ENCODE measurements at regions of chr1 and their contacts with region 1.

Region 1: DNA sequence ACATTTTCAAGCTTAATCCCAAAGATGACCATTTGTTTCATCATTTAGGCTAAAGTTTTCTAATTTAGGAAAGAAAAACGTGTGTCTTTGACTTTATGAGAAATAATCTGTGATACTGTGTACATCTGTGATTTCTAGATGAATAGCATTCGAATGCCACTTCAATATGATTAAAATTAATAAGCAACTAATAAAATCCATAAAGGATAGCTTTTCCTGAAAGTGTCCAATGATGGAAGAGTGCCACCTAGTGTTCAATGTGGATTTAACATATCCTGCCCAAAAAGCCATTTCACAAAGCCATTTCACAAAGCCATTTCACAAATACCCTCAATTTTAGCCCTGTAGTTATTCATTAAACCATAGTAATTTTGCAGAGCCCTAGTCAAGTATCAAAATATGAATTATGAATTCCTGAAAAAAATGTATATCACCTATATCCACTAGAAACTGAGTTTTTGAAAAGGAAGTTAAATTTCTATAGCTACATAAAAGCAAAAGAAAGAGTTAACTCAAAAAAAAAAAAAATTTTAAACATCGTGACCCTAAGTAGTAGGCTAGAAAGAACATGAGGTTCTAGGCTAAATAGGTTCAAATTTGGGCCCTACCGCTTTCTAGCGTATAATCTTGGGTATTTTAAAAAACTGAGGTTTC is 19.1 kb downstream of the NME7 start:
- DNase-seq: peak in 7 of 9 donors; percentile 12 to 56 (median 39)
- ATAC-seq: peak; percentile 60
- H3K4me3 ChIP-seq: no peak overlapping the region
- H3K4me3 Mint-ChIP-seq: no peak overlapping the region
- H3K27ac ChIP-seq: no peak overlapping the region
- H3K27ac Mint-ChIP-seq: no peak overlapping the region
- H3K4me1 ChIP-seq: no peaks in the 10 kb centered on the region
- H3K4me1 Mint-ChIP-seq: peaks cover 0 to 18% (median 8%) of the 10 kb centered on the region in 7 donors
- H3K27me3 ChIP-seq: no peaks in the 10 kb centered on the region
- H3K27me3 Mint-ChIP-seq: peaks cover 0 to 3% (median 0%) of the 10 kb centered on the region in 5 donors

Region 2: DNA sequence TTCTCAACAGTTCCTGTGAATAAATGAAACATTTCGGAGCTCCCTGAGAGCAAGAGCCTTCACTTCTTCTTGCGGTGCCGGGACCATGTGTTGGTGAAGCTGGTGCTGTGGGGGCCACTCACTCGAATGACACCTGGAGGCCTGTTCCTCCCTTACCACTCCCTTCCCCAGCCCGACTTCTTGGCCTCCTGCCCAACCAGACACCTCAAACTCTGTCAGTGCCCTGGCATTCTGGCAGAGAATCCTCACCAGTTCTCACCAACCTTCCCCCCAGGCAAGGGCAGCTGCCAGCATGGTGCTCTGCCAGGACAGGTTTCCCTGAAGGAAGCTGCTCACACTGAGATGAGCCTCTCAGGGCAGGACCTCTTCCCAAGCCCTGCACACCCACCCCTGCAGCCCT is 1558.4 kb before region 1 on chr1:
- CTCF ChIA-PET with region 1: no interaction called
- POLR2A ChIA-PET with region 1: no interaction called
- intact Hi-C with region 1: no loop called
- DNase-seq: no peak
- ATAC-seq: no peak
- H3K4me3 ChIP-seq: no peak overlapping the region
- H3K4me3 Mint-ChIP-seq: no peak overlapping the region
- H3K27ac ChIP-seq: no peak overlapping the region
- H3K27ac Mint-ChIP-seq: peak overlapping the region in 2 of 9 donors; percentile 32 to 33
- H3K4me1 ChIP-seq: no peaks in the 10 kb centered on the region
- H3K4me1 Mint-ChIP-seq: peaks cover 0 to 3% (median 0%) of the 10 kb centered on the region in 7 donors
- H3K27me3 ChIP-seq: no peaks in the 10 kb centered on the region
- H3K27me3 Mint-ChIP-seq: no peaks in the 10 kb centered on the region

Region 3: DNA sequence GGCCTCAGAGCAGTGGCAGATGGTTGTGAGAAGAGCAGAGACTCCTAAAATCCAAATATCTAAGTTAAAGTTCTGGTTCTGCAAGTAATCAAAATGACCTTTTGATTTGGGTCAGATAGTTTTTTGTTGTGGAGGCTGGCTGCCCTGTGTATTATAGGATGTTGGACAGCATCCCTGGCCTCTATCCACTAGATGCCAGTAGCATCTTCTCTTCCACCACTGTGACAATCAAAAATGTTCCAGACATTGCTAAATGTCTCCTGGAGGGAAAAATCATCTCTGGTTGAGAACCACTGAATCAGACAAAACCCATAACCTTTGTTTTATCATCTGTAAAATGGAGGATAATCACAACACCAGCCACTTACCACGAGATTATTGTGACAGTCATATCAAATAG is 613.6 kb before region 1 on chr1:
- CTCF ChIA-PET with region 1: no interaction called
- POLR2A ChIA-PET with region 1: no interaction called
- intact Hi-C with region 1: loop called in 1 of 2 experiments (anchors 1 kb)
- DNase-seq: no peak
- ATAC-seq: no peak
- H3K4me3 ChIP-seq: no peak overlapping the region
- H3K4me3 Mint-ChIP-seq: no peak overlapping the region
- H3K27ac ChIP-seq: no peak overlapping the region
- H3K27ac Mint-ChIP-seq: no peak overlapping the region
- H3K4me1 ChIP-seq: no peaks in the 10 kb centered on the region
- H3K4me1 Mint-ChIP-seq: no peaks in the 10 kb centered on the region
- H3K27me3 ChIP-seq: no peaks in the 10 kb centered on the region
- H3K27me3 Mint-ChIP-seq: peaks cover 4 to 18% (median 6%) of the 10 kb centered on the region in 5 donors

Region 4: GRCh38 chr1:169360415-169360814 is 11.9 kb after region 1 on chr1:
- CTCF ChIA-PET with region 1: interaction called, 16 read pairs
- POLR2A ChIA-PET with region 1: no interaction called
- intact Hi-C with region 1: no loop called
- DNase-seq: no peak
- ATAC-seq: no peak
- H3K4me3 ChIP-seq: no peak overlapping the region
- H3K4me3 Mint-ChIP-seq: no peak overlapping the region
- H3K27ac ChIP-seq: no peak overlapping the region
- H3K27ac Mint-ChIP-seq: no peak overlapping the region
- H3K4me1 ChIP-seq: no peaks in the 10 kb centered on the region
- H3K4me1 Mint-ChIP-seq: peaks cover 5 to 31% (median 15%) of the 10 kb centered on the region in 7 donors
- H3K27me3 ChIP-seq: no peaks in the 10 kb centered on the region
- H3K27me3 Mint-ChIP-seq: no peaks in the 10 kb centered on the region